B cell (primary cell): ENCODE measurements at regions of chr7 and their contacts with region 1.

Region 1: DNA sequence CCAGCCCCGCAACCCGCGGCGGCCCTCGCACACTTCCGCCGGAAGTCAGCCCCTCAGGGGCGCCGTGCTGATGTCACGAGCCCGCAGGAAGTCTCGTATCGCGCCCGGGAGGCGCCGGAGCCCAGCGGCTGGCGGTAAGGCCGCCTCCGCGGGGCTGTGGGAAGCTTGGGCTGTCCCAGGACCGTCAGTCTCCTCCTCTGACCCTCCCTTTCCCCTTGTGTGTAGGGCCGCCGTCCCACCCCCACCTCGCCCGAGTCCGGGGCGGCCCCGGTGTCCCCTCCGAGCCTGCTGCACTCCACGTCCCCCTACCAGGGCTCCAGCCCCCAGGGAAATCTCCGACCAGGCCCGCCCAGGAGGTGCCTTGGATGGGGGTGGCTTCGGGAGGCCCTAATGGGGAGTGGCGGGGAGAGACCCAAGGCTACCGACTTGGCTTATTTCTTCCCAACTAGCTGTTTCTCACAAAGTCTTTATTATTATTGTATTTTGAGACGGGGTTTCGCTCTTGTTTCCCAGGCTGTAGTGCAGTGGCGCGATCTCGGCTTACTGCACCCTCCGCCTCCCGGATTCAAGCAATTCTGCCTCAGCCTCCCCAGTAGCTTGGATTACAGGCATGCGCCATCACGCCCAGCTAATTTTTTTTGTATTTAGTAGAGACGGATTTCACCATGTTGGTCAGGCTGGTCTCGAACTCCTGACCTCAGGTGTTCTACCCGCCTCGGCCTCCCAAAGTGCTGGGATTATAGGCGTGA is at the start of gene ZDHHC4:
- DNase-seq: peak; percentile 92
- ATAC-seq: peak; percentile 90
- H3K4me3 ChIP-seq: peak within 1 kb of the TSS; percentile 23 to 78 (median 75)
- H3K4me3 Mint-ChIP-seq: peak within 1 kb of the TSS; percentile 90
- H3K27ac ChIP-seq: peak within 1 kb of the TSS; percentile 93 to 97
- H3K27ac Mint-ChIP-seq: peak within 1 kb of the TSS; percentile 94
- H3K4me1 ChIP-seq: peaks cover 0 to 33% of the 10 kb centered on the region in 2 donors
- H3K4me1 Mint-ChIP-seq: peaks cover 34% of the 10 kb centered on the region
- H3K27me3 ChIP-seq: no peaks in the 10 kb centered on the region
- H3K27me3 Mint-ChIP-seq: peaks cover 4% of the 10 kb centered on the region
- CTCF ChIP-seq: no peak
- total RNA-seq, gene ZDHHC4: 38.5 and 49.4 TPM in 2 replicates

Region 2: DNA sequence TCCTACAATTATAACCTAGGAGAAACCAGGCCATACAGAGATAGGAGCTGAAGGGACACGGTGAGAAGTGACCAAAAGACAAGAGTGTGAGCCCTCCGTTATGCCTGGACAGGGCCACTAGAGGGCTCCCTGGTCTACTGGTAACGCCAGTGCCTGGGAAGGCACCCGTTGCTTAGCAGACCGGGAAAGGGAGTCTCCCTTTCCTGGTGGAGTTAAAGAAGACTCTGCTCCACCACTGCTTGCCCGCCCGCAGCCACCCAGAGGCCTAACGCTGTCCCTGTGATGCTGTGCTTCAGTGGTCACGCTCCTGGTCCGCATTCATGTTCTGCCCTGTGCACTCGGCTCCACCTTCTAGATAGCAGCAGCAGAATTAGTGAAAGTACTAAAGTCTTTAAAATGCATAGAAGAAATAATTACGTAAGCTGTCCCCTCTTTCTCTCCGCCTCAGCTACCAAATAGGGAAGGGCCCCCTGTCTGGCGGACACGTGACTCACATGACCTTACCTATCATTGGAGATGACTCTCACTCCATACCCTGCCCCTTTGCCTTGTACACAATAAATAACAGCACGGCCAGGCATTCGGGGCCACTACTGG is 61.1 kb before region 1 on chr7:
- CTCF ChIA-PET with region 1: interaction called, 11 read pairs
- POLR2A ChIA-PET with region 1: no interaction called
- intact Hi-C with region 1: no loop called
- DNase-seq: peak; percentile 77
- ATAC-seq: peak; percentile 78
- H3K4me3 ChIP-seq: peak overlapping the region; percentile 5 to 62 (median 35)
- H3K4me3 Mint-ChIP-seq: peak overlapping the region; percentile 95
- H3K27ac ChIP-seq: no peak overlapping the region
- H3K27ac Mint-ChIP-seq: peak overlapping the region; percentile 77
- H3K4me1 ChIP-seq: peaks cover 10 to 21% of the 10 kb centered on the region in 2 donors
- H3K4me1 Mint-ChIP-seq: peaks cover 14% of the 10 kb centered on the region
- H3K27me3 ChIP-seq: no peaks in the 10 kb centered on the region
- H3K27me3 Mint-ChIP-seq: no peaks in the 10 kb centered on the region
- CTCF ChIP-seq: peak; percentile 94

Region 3: DNA sequence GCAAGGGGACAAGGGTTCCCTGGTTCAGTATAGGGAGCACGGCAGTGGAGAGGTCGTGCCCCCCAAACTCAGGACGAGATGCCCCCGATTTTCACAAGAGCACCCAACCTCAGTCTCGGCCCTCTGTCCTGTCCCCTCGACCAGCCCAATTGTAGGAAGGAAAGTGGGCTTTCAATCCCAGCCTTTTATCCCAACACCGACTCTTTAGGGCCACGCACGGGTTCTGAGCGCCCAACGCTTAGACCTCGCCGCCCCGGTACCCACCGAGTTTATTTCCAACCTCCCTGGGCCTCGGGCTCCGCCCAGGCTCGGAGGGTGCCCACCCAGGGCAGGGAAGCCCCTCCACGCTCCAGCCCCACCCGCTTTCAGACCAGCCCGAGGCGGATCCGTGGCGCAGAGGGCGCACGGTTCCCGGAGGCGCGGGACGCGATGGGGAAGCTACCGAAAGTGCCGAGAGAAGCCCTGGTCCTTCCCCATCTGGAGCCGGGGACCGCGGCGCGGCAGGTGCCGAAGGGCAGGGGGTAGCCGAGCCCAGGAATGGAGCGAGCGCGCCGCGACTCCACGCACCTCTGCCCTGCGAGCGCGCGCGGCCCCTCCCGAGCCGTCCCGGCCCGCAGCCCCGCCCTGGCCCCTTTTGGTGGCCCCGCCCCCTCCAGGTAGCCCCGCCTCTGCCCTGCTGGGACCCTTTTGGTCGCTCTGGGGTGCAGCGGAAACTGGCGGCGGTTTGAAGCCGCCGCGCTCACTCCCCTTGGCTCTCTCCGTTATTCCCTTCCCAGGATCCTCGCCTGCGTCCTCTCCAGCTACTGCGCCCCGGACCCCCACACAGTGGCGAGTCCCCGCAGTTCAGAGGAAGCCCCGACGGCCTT is 46.7 kb before region 1 on chr7:
- CTCF ChIA-PET with region 1: interaction called, 4 read pairs
- POLR2A ChIA-PET with region 1: no interaction called
- intact Hi-C with region 1: loop called (anchors 2 kb)
- DNase-seq: peak; percentile 79
- ATAC-seq: peak; percentile 90
- H3K4me3 ChIP-seq: peak overlapping the region; percentile 36 to 70 (median 68)
- H3K4me3 Mint-ChIP-seq: peak overlapping the region; percentile 89
- H3K27ac ChIP-seq: peak overlapping the region in 1 of 2 donors; percentile 6
- H3K27ac Mint-ChIP-seq: peak overlapping the region; percentile 61
- H3K4me1 ChIP-seq: peaks cover 19 to 26% of the 10 kb centered on the region in 2 donors
- H3K4me1 Mint-ChIP-seq: peaks cover 26% of the 10 kb centered on the region
- H3K27me3 ChIP-seq: peaks cover 0 to 38% (median 10%) of the 10 kb centered on the region in 4 experiments
- H3K27me3 Mint-ChIP-seq: peaks cover 26% of the 10 kb centered on the region
- CTCF ChIP-seq: no peak

Region 4: DNA sequence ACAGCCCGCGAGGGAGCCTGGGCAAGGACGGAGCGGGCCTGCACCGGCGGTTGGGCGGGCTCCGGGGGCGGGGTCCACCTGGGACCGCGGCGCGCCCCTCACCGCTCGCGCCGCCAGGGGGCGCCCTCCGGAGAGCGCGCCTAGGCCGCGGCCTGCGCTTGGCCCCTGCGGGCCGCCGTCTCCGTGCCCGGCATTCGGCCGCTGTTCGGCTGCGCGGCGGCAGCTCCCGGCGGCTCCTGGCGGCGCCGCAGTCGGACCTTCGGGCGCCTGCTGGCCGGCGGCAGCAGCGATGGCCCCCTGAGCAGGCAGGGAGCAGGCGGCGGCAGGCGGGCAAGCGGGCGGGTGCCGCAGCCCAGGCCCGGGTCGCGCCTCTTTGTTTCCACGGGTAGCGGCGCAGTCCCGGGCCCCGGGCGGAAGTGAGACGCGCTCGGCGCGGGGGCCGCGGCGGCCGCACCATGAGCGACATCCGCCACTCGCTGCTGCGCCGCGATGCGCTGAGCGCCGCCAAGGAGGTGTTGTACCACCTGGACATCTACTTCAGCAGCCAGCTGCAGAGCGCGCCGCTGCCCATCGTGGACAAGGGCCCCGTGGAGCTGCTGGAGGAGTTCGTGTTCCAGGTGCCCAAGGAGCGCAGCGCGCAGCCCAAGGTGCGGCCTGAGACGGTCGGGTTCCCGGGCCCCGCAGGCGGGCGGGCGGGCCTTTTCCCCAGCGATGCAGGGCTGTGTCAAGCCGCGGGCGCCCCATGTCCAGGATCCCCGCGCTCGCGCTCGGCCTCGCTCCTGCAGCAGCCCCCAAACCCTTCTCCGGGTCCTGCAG is 12.5 kb after region 1 on chr7 and contains the start of gene INTS15:
- CTCF ChIA-PET with region 1: interaction called, 6 read pairs
- POLR2A ChIA-PET with region 1: interaction called, 6 read pairs
- intact Hi-C with region 1: loop called (anchors 1 kb)
- DNase-seq: peak; percentile 94
- ATAC-seq: peak; percentile 91
- H3K4me3 ChIP-seq: peak within 1 kb of the TSS; percentile 45 to 82 (median 74)
- H3K4me3 Mint-ChIP-seq: peak within 1 kb of the TSS; percentile 88
- H3K27ac ChIP-seq: peak within 1 kb of the TSS; percentile 54 to 76
- H3K27ac Mint-ChIP-seq: peak within 1 kb of the TSS; percentile 88
- H3K4me1 ChIP-seq: peaks cover 15 to 19% of the 10 kb centered on the region in 2 donors
- H3K4me1 Mint-ChIP-seq: peaks cover 13% of the 10 kb centered on the region
- H3K27me3 ChIP-seq: no peaks in the 10 kb centered on the region
- H3K27me3 Mint-ChIP-seq: no peaks in the 10 kb centered on the region
- CTCF ChIP-seq: peak; percentile 74
- total RNA-seq, gene INTS15: 57.1 and 57.8 TPM in 2 replicates

Region 5: GRCh38 chr7:6637544-6638229 is 60.1 kb after region 1 on chr7:
- CTCF ChIA-PET with region 1: interaction called, 4 read pairs
- POLR2A ChIA-PET with region 1: no interaction called
- intact Hi-C with region 1: loop called (anchors 1 kb)
- DNase-seq: peak; percentile 86
- ATAC-seq: peak; percentile 86
- H3K4me3 ChIP-seq: peak overlapping the region in 4 of 5 experiments; percentile 37 to 69 (median 61)
- H3K4me3 Mint-ChIP-seq: peak overlapping the region; percentile 86
- H3K27ac ChIP-seq: peak overlapping the region; percentile 18 to 79
- H3K27ac Mint-ChIP-seq: peak overlapping the region; percentile 88
- H3K4me1 ChIP-seq: peaks cover 20 to 25% of the 10 kb centered on the region in 2 donors
- H3K4me1 Mint-ChIP-seq: peaks cover 35% of the 10 kb centered on the region
- H3K27me3 ChIP-seq: no peaks in the 10 kb centered on the region
- H3K27me3 Mint-ChIP-seq: no peaks in the 10 kb centered on the region
- CTCF ChIP-seq: peak; percentile 69

Region 6: DNA sequence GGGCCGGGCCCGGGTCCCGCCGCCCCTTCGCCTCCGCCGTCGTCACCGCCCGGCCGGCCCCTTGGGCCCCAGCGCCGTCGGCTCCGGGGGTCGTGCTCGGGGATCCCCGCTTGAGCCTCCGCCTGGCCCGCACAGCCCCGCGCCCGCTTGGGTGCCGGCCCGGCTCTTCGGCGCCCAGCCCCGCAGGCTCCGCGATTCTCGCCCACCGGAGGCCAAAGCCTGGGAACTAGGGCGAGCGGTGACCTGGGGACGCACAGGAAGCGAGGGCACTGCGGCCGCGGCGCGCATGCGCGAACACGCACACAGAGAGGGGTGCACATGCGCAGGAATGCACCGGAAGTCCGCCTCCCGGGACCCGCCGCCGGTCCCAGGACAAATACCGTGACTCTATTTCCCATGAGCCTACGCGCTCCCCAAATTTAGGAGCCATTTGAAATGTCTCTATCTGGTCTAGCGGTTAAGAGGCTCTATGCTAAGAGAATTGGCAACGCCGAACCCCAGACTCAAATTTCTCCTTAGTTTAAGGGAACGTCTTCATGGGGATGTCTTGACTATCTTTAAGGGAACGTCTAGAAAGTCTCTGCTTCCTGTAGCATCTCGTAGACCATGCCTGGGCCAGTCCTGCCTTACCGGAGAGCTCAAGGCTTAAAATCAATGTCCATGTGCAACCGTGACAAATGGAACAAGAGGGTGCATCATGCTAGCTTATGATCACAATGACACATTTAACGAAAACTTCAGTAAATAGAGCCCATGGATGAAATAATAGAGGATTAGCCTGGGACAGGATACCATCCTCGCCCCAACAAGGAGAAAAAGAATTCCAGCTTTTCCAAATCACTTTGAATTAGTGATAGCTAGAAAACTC is 129.4 kb after region 1 on chr7 and contains the start of gene ZNF12:
- CTCF ChIA-PET with region 1: no interaction called
- POLR2A ChIA-PET with region 1: no interaction called
- intact Hi-C with region 1: loop called (anchors 5 kb)
- DNase-seq: peak; percentile 96
- ATAC-seq: peak; percentile 91
- H3K4me3 ChIP-seq: peak within 1 kb of the TSS; percentile 67 to 90 (median 84)
- H3K4me3 Mint-ChIP-seq: peak within 1 kb of the TSS; percentile 91
- H3K27ac ChIP-seq: peak within 1 kb of the TSS; percentile 71 to 84
- H3K27ac Mint-ChIP-seq: peak within 1 kb of the TSS; percentile 91
- H3K4me1 ChIP-seq: peaks cover 26 to 28% of the 10 kb centered on the region in 2 donors
- H3K4me1 Mint-ChIP-seq: peaks cover 35% of the 10 kb centered on the region
- H3K27me3 ChIP-seq: peaks cover 0 to 3% (median 0%) of the 10 kb centered on the region in 4 experiments
- H3K27me3 Mint-ChIP-seq: peaks cover 4% of the 10 kb centered on the region
- CTCF ChIP-seq: no peak
- total RNA-seq, gene ZNF12: 41.3 and 48.8 TPM in 2 replicates